ENCODE measurements at regions of chr16 and their contacts with region 1.

Region 1: DNA sequence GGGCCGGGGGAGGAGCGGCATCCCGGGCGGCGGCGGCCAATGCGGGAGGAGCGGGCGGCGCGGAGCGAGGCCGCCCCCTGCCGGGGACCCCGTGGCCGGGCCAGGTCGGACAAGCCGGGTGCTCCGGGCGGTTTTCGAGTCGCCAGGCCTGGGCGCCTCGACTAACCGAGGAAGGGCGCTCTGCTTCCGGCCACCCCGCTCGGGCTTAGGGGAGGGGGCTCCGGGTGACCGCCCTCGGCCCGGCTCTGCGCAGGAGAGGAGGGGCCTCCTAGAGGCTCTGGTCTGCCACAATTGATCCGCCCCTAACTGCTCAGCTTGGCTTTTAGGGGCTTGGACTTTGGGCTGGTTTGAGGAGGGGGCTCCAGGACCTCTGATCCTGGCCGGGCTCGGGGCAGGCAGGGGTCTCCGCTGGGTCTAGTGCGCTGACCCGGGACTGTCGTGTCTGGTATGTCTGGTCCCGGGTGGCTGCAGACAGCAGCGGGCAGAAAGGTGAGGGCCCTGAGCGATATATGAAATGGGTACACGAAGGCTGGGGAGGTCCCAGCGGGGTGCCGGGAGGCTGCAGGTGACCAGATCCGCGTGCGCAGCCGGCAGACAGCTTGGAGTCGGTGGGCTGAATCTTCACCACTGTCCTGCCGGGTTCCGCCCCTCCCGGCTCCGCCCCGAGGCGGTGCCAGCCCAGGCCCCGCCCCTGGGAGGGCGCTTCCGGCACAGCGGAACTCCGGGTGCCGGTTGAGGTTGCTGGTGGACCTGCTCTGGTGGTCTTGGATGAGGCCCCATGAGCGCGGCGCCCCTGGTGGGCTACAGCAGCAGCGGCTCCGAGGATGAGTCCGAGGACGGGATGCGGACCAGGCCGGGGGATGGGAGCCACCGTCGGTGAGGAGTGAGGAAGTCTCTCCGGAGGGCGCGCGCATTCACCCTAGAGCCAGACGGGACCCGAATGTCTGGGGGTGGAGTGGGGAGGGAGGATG is at the start of gene USB1:
- DNase-seq: peak; percentile 83
- H3K4me3 ChIP-seq: peak within 1 kb of the TSS; percentile 66 to 93 (median 85)
- H3K27ac ChIP-seq: peak within 1 kb of the TSS; percentile 49
- H3K4me1 ChIP-seq: peaks cover 33% of the 10 kb centered on the region
- H3K27me3 ChIP-seq: no peaks in the 10 kb centered on the region
- CTCF ChIP-seq: peak; percentile 19 to 64
- total RNA-seq, gene USB1: 36.2 to 61.1 TPM

Region 2: DNA sequence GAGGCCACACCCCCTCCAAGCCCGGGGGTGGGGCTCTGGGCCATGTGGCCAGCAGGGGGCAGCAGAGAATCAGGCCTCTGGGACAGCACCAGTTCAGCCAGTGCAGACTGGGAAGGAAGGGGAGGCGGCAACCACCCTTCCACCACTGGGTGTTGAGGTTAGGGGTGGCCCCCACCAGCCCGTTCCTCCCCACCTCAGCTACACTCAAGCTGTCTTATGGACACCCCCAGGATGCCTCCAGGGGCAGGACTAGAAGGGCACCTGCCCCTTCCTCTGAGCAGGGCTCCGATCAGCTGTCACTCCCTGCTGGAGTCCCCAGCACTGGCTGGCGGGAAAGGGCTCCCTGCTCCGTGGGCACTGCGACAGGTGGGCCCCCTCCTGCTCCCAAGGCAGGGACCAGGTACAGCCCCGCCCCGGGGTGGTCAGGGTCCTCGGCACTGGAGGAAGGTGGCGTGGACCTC is 243.6 kb before region 1 on chr16:
- CTCF ChIA-PET with region 1: no interaction called
- dilution Hi-C with region 1: no loop called
- in situ Hi-C with region 1: loop called in 1 of 2 experiments (anchors 10 kb)
- intact Hi-C with region 1: loop called (anchors 1 kb)
- DNase-seq: peak; percentile 62
- H3K4me3 ChIP-seq: no peak overlapping the region
- H3K27ac ChIP-seq: no peak overlapping the region
- H3K4me1 ChIP-seq: peaks cover 10% of the 10 kb centered on the region
- H3K27me3 ChIP-seq: no peaks in the 10 kb centered on the region
- CTCF ChIP-seq: peak; percentile 85 to 98

Region 3: GRCh38 chr16:57899771-57900661 is 101.0 kb before region 1 on chr16:
- CTCF ChIA-PET with region 1: no interaction called
- dilution Hi-C with region 1: no loop called
- in situ Hi-C with region 1: loop called (anchors 5 kb)
- intact Hi-C with region 1: loop called (anchors 1 kb)
- DNase-seq: peak; percentile 42
- H3K4me3 ChIP-seq: no peak overlapping the region
- H3K27ac ChIP-seq: no peak overlapping the region
- H3K4me1 ChIP-seq: peaks cover 3% of the 10 kb centered on the region
- H3K27me3 ChIP-seq: no peaks in the 10 kb centered on the region
- CTCF ChIP-seq: peak; percentile 90 to 95

Region 4: DNA sequence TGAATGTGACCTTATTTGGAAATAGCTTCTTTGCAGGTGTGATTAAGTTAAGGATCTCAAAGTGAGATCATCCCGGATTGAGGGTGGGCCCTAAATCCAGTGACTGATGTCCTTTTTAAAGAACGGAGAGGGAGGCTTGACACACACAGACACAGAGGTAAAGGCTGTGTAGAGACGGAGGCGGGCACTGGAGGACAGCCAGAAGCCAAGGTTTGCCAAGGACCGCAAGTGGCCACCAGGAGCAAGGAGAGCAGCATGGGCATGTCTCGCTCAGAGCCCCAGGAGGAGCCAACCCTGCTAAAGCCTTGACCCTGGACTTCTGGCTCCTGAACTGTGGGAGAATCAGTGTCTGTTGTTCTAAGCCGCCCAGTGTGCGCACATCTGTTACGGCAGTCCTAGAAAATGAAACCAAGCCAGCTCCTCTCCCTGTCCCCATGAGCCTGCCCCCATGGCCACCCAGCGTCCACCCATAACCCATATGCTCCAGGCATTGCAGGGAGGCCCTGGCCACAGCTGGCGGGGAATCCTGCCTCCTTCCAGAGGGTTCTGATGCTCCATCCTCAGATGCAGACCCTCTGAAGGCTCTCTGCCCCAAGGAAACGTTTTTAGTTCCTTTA is 45.3 kb before region 1 on chr16:
- CTCF ChIA-PET with region 1: no interaction called
- dilution Hi-C with region 1: no loop called
- in situ Hi-C with region 1: no loop called
- intact Hi-C with region 1: loop called (anchors 2 kb)
- DNase-seq: peak; percentile 63
- H3K4me3 ChIP-seq: peak overlapping the region in 1 of 3 experiments; percentile 7
- H3K27ac ChIP-seq: no peak overlapping the region
- H3K4me1 ChIP-seq: peaks cover 14% of the 10 kb centered on the region
- H3K27me3 ChIP-seq: no peaks in the 10 kb centered on the region
- CTCF ChIP-seq: peak; percentile 32 to 56

Region 5: GRCh38 chr16:58494981-58495520 is 494.1 kb after region 1 on chr16:
- CTCF ChIA-PET with region 1: no interaction called
- dilution Hi-C with region 1: no loop called
- in situ Hi-C with region 1: loop called in 1 of 2 experiments (anchors 25 kb)
- intact Hi-C with region 1: no loop called
- DNase-seq: peak; percentile 96
- H3K4me3 ChIP-seq: no peak overlapping the region
- H3K27ac ChIP-seq: no peak overlapping the region
- H3K4me1 ChIP-seq: no peaks in the 10 kb centered on the region
- H3K27me3 ChIP-seq: no peaks in the 10 kb centered on the region
- CTCF ChIP-seq: peak; percentile 42 to 52